Activated T-helper 1 cell treated with anti-CD3 and anti-CD28 coated beads, Interleukin-12 subunit alpha, Interleukin-12 subunit beta, Interleukin-2, Interleukin-4 antibody, amounts not matched to agents 30 ng/mL and 10 ng/mL and 1 ng/mL, durations not matched to agents 14 hours and 24 hours and 36 hours (primary cell): ENCODE measurements at regions of chr9 and their contacts with region 1.

Region 1: DNA sequence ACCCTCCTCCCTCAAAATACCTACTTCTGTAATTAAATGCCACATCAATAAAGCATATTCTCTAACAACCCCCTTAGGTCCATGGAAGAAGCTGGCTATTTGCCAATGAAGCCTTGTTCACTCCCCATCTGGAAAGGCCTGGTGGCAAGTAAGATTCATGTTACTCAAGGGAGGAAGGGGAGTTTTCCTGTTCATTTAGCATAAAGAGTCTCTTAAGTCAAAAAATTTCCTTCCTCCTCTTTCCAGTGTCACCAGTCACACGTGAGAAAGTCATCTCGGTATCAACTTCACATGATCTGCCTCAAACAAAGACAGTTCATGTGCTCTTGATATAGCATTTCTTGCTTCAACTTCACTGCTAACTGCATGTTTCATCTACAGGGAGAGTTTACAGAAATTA is 32.7 kb upstream of the RIC1 start:
- DNase-seq: no peak
- H3K4me3 Mint-ChIP-seq: no peak overlapping the region
- H3K27ac Mint-ChIP-seq: no peak overlapping the region
- H3K4me1 Mint-ChIP-seq: peaks cover 29% of the 10 kb centered on the region
- H3K27me3 Mint-ChIP-seq: no peaks in the 10 kb centered on the region

Region 2: GRCh38 chr9:5073701-5074100 is 522.5 kb before region 1 on chr9:
- intact Hi-C with region 1: loop called (anchors 2 kb)
- DNase-seq: no peak
- H3K4me3 Mint-ChIP-seq: no peak overlapping the region
- H3K27ac Mint-ChIP-seq: no peak overlapping the region
- H3K4me1 Mint-ChIP-seq: peaks cover 22% of the 10 kb centered on the region
- H3K27me3 Mint-ChIP-seq: no peaks in the 10 kb centered on the region

Region 3: GRCh38 chr9:5186416-5187169 is 409.6 kb before region 1 on chr9:
- intact Hi-C with region 1: loop called (anchors 1 kb)
- DNase-seq: peak; percentile 46
- H3K4me3 Mint-ChIP-seq: no peak overlapping the region
- H3K27ac Mint-ChIP-seq: no peak overlapping the region
- H3K4me1 Mint-ChIP-seq: peaks cover 24% of the 10 kb centered on the region
- H3K27me3 Mint-ChIP-seq: no peaks in the 10 kb centered on the region

Region 4: DNA sequence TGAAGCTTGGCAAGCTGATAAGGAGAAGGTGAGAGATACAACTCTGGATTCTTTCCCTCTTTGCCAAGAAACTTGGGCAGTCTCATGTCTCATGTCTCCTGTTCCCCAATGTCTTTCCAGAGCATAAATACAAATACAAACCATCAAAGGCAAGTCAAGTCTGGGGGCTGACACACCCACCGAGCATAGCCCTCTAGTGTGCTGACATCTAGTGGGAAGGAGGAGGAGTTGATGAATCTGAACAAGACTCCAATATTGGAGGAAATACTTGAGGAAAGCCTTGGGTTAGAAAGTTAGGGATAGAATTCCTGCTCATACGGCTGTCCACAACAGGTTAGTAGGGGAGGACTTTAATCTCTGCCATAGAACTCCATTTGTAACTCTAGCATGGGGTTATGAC is 303.1 kb after region 1 on chr9:
- intact Hi-C with region 1: no loop called
- DNase-seq: no peak
- H3K4me3 Mint-ChIP-seq: no peak overlapping the region
- H3K27ac Mint-ChIP-seq: no peak overlapping the region
- H3K4me1 Mint-ChIP-seq: peaks cover 9% of the 10 kb centered on the region
- H3K27me3 Mint-ChIP-seq: no peaks in the 10 kb centered on the region